Caco-2 (cell line): ENCODE measurements at regions of chr16 and their contacts with region 1.

Region 1: DNA sequence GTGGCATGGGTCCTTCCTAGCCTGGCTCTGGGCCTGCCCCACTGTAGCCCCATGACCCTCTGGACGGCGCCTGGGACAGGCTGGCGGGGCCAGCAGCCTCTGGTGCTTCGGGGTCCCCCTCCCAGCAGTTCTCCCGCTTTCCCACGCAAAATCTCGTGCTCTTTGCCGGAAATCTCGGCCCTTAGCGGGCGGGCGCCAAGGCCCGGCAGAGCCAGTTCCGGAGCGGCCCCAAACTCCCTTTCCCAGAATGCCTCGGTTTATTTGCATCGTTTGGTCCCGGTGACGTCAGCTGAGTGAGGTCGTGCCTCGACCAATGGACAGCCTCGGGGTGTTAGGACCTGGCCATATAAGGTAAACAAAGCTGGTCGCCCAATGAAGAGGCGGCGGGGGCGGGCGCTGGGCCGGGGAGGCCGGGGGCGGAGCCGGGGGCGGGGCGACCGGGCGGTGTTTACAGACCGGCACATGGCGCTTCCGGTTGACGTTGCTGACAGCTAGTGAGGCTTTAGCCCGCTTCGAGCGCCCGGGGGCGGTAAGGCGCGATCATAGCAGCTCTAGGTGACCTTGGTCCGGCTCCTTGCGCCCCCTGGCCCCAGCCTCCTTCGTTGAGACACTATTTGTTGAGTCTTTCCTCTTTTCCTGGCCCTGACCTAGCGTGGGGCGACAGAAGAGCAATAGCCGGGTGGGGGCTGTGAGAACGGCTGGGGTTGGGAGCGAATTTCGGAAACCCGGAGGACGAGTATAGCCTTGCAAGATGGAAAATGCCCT is 1.5 kb upstream of the UBALD1 start:
- DNase-seq: peak; percentile 98 to 100
- H3K4me3 ChIP-seq: peak overlapping the region; percentile 42
- H3K4me3 Mint-ChIP-seq: peak overlapping the region; percentile 94
- H3K27ac Mint-ChIP-seq: peak overlapping the region; percentile 100
- H3K4me1 ChIP-seq: peaks cover 42% of the 10 kb centered on the region
- H3K4me1 Mint-ChIP-seq: peaks cover 7% of the 10 kb centered on the region
- H3K27me3 ChIP-seq: no peaks in the 10 kb centered on the region
- H3K27me3 Mint-ChIP-seq: no peaks in the 10 kb centered on the region
- CTCF ChIP-seq: peak; percentile 33 to 63

Region 2: DNA sequence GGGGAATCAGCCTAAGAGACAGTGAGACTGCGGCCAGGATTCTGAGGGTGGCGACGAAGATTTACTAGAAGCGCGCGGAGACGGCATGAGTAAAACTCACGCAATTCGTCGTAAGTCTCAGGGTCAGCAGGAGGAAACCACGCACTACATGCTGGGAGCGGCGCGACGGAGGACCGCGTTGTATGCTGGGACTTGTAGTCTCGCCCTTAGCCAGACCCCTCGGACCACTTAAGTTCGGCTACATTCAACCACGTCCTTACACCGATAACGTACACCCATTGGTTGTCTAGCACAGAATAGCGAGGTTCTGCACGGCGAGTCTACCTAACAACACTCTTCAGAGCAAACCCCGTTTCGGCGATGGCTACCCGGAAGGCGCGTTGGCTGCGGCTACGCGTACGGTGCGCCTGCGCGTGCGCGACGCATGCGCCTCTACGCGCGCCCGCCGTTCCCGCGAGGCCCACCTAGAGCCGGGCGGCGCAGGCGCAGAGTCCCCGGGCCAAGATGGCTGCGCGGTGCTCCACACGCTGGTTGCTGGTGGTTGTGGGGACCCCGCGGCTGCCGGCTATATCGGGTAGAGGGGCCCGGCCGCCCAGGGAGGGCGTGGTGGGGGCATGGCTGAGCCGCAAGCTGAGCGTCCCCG is 190.7 kb before region 1 on chr16 and contains the start of gene DNAJA3:
- CTCF ChIA-PET with region 1: no interaction called
- POLR2A ChIA-PET with region 1: no interaction called
- intact Hi-C with region 1: loop called (anchors 5 kb)
- DNase-seq: peak; percentile 89 to 91
- H3K4me3 ChIP-seq: peak within 1 kb of the TSS; percentile 50
- H3K4me3 Mint-ChIP-seq: peak within 1 kb of the TSS; percentile 94
- H3K27ac Mint-ChIP-seq: peak within 1 kb of the TSS; percentile 99
- H3K4me1 ChIP-seq: peaks cover 9% of the 10 kb centered on the region; the same call in 1 of the 2 replicates
- H3K4me1 Mint-ChIP-seq: peaks cover 6% of the 10 kb centered on the region
- H3K27me3 ChIP-seq: no peaks in the 10 kb centered on the region
- H3K27me3 Mint-ChIP-seq: no peaks in the 10 kb centered on the region
- CTCF ChIP-seq: no peak
- total RNA-seq, gene DNAJA3: 77.1 and 79.6 TPM in 2 replicates

Region 3: DNA sequence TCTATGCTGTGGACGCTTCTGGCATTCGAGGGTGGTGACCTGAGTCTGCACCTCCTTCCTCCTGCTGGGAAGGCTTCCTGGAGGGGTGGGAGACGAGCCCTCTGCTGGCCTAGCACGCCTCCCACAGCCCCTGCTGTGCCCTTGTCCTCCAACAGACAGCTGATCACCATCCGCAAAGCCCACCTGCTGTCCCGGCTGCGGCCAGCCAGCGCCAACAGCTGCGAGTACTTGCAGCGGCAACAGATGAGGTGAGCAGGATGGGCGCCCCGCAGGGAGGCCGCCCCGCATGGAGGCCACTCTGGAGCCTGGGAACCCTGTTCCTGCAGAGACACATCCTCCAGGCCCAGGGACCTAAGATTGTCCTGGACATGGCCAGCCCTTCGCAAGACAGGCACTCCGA is 23.2 kb before region 1 on chr16:
- CTCF ChIA-PET with region 1: no interaction called
- POLR2A ChIA-PET with region 1: no interaction called
- intact Hi-C with region 1: no loop called
- DNase-seq: no peak
- H3K4me3 ChIP-seq: no peak overlapping the region
- H3K4me3 Mint-ChIP-seq: no peak overlapping the region
- H3K27ac Mint-ChIP-seq: no peak overlapping the region
- H3K4me1 ChIP-seq: no peaks in the 10 kb centered on the region
- H3K4me1 Mint-ChIP-seq: no peaks in the 10 kb centered on the region
- H3K27me3 ChIP-seq: no peaks in the 10 kb centered on the region
- H3K27me3 Mint-ChIP-seq: peaks cover under 1% of the 10 kb centered on the region
- CTCF ChIP-seq: no peak

Region 4: GRCh38 chr16:4654011-4654963 is 38.1 kb after region 1 on chr16:
- CTCF ChIA-PET with region 1: interaction called, 13 read pairs
- POLR2A ChIA-PET with region 1: no interaction called
- intact Hi-C with region 1: no loop called
- DNase-seq: peak; percentile 53 to 78
- H3K4me3 ChIP-seq: no peak overlapping the region
- H3K4me3 Mint-ChIP-seq: peak overlapping the region; percentile 43
- H3K27ac Mint-ChIP-seq: peak overlapping the region; percentile 86
- H3K4me1 ChIP-seq: peaks cover 29% of the 10 kb centered on the region
- H3K4me1 Mint-ChIP-seq: peaks cover 11% of the 10 kb centered on the region
- H3K27me3 ChIP-seq: no peaks in the 10 kb centered on the region
- H3K27me3 Mint-ChIP-seq: no peaks in the 10 kb centered on the region
- CTCF ChIP-seq: no peak